MCF 10A (cell line): ENCODE measurements at regions of chr1 and their contacts with region 1.

Region 1: DNA sequence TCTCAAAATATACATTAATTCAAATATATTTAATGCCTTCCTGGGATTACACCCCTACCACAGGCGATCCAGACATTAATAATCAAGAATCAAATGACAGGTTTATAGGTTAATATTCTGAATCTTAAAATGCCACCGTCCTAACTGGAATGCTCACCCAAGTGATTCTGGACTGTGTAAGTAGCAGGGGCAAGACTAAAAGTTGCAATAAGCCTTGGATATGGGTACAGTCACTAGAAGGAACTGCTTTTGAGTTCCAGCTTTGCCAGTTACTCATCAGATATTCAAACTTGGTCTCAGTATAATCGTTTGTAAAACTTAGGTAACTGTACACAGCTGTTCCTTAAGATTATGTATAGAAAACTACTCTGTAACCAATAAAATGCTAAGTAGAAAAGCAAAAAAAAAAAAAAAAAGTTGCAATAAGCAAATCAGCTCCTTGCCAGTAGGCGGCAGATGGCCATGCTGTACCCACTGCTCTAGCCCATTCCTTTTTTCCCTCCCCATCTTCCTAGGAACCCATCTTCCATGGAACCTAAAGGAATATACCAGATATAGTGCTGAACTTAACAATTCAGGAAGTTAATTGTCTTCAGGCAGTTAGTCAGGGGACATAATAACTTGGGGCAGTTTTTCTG is 10.5 kb downstream of the RO60 start:
- DNase-seq: peak; percentile 50
- H3K4me3 Mint-ChIP-seq: no peak overlapping the region
- H3K27ac Mint-ChIP-seq: no peak overlapping the region
- H3K4me1 Mint-ChIP-seq: peaks cover 13% of the 10 kb centered on the region
- H3K27me3 Mint-ChIP-seq: no peaks in the 10 kb centered on the region
- CTCF ChIP-seq: peak; percentile 28

Region 2: GRCh38 chr1:192580351-192580962 is 489.4 kb before region 1 on chr1:
- CTCF ChIA-PET with region 1: no interaction called
- POLR2A ChIA-PET with region 1: no interaction called
- intact Hi-C with region 1: no loop called
- DNase-seq: peak; percentile 72
- H3K4me3 Mint-ChIP-seq: no peak overlapping the region
- H3K27ac Mint-ChIP-seq: no peak overlapping the region
- H3K4me1 Mint-ChIP-seq: peaks cover 6% of the 10 kb centered on the region
- H3K27me3 Mint-ChIP-seq: no peaks in the 10 kb centered on the region
- CTCF ChIP-seq: peak; percentile 74

Region 3: GRCh38 chr1:193083365-193084088 is 13.7 kb after region 1 on chr1:
- CTCF ChIA-PET with region 1: interaction called, 3 read pairs
- POLR2A ChIA-PET with region 1: interaction called, 10 read pairs
- intact Hi-C with region 1: no loop called
- DNase-seq: no peak
- H3K4me3 Mint-ChIP-seq: no peak overlapping the region
- H3K27ac Mint-ChIP-seq: no peak overlapping the region
- H3K4me1 Mint-ChIP-seq: no peaks in the 10 kb centered on the region
- H3K27me3 Mint-ChIP-seq: no peaks in the 10 kb centered on the region
- CTCF ChIP-seq: no peak